ENCODE measurements at regions of chr2 and their contacts with region 1.

Region 1: GRCh38 chr2:224545884-224546644 is 39.1 kb downstream of the CUL3 start:
- DNase-seq: no peak
- H3K4me3 ChIP-seq: no peak overlapping the region
- H3K27ac ChIP-seq: no peak overlapping the region
- H3K4me1 ChIP-seq: no peaks in the 10 kb centered on the region
- H3K27me3 ChIP-seq: no peaks in the 10 kb centered on the region
- CTCF ChIP-seq: no peak

Region 2: DNA sequence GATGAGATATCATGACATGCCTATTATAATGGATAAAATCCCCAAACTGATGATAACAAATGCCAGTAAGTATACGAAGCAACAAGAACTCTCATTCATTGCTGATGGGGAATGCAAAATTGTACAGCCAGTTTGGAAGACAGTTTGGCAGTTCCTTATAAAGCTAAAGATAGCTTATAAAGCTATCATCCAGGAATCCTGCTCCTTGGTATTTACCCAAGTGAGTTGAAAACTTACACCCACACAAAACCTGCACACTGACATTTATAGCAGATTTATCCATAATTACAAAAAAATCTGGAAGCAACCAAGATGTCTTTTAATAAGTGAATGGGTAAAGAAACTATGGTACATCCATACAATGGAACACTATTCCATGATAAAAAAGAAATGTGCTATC is 84.7 kb before region 1 on chr2:
- CTCF ChIA-PET with region 1: interaction called, 16 read pairs
- POLR2A ChIA-PET with region 1: no interaction called
- intact Hi-C with region 1: no loop called
- DNase-seq: no peak
- H3K4me3 ChIP-seq: no peak overlapping the region
- H3K27ac ChIP-seq: no peak overlapping the region
- H3K4me1 ChIP-seq: no peaks in the 10 kb centered on the region
- H3K27me3 ChIP-seq: no peaks in the 10 kb centered on the region
- CTCF ChIP-seq: no peak

Region 3: DNA sequence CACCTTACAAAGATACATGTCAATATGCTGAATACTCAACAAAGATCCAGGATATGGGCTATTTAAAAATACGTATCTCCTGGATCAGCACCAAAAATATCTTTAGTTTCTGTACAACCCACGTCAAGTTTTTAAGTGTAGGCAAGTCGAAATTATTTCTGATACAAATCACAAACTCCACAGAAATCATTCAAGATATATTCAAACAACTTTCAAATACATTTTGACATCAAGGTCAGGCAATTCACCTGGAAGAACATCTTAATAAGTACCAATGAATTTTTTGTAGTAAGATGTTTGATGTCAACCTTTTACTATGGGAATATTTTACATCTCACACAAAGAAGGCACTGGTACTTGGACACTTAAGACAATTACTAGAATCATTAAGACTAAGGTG is 47.1 kb before region 1 on chr2:
- CTCF ChIA-PET with region 1: no interaction called
- POLR2A ChIA-PET with region 1: no interaction called
- intact Hi-C with region 1: loop called (anchors 5 kb)
- DNase-seq: no peak
- H3K4me3 ChIP-seq: no peak overlapping the region
- H3K27ac ChIP-seq: no peak overlapping the region
- H3K4me1 ChIP-seq: no peaks in the 10 kb centered on the region
- H3K27me3 ChIP-seq: no peaks in the 10 kb centered on the region
- CTCF ChIP-seq: no peak

Region 4: DNA sequence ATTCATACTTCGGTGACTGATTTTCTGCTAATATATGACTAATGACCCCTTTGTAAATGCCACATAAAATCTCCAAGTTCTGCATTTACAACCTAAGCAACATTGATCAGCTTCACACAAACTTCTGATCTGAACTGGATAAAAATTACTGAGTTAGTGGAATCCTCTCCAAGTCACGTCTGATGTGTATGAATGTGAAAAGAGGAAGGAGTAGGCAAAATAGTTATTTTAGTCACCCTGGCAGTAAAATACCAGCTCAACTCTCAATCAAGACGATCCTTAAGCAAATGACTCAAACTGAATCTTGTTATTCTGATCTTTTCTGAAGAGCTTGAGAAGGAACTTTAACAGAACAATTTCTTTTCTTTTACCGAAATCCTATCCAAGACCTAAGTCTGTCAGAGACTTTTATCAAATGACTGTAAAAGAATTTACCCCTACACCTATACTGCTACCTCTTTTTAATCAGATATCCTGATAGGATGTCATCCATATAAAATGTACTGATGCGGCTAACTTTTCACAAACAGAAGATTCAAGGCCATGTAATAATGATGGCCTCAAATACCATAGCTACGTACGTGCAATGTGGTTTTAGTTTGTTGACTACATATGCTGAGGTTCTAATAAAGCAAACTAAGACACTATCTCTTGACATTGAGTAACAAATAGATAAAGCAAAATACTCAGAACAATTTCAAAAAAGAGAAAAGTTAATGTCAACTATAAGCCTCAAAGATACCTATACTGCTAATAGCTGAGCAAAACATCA is 15.4 kb after region 1 on chr2:
- CTCF ChIA-PET with region 1: no interaction called
- POLR2A ChIA-PET with region 1: interaction called, 10 read pairs
- intact Hi-C with region 1: loop called (anchors 2 kb)
- DNase-seq: no peak
- H3K4me3 ChIP-seq: no peak overlapping the region
- H3K27ac ChIP-seq: no peak overlapping the region
- H3K4me1 ChIP-seq: no peaks in the 10 kb centered on the region
- H3K27me3 ChIP-seq: no peaks in the 10 kb centered on the region
- CTCF ChIP-seq: no peak